Left cardiac atrium (tissue), 4 donors: ENCODE measurements at regions of chr2 and their contacts with region 1.

Region 1: DNA sequence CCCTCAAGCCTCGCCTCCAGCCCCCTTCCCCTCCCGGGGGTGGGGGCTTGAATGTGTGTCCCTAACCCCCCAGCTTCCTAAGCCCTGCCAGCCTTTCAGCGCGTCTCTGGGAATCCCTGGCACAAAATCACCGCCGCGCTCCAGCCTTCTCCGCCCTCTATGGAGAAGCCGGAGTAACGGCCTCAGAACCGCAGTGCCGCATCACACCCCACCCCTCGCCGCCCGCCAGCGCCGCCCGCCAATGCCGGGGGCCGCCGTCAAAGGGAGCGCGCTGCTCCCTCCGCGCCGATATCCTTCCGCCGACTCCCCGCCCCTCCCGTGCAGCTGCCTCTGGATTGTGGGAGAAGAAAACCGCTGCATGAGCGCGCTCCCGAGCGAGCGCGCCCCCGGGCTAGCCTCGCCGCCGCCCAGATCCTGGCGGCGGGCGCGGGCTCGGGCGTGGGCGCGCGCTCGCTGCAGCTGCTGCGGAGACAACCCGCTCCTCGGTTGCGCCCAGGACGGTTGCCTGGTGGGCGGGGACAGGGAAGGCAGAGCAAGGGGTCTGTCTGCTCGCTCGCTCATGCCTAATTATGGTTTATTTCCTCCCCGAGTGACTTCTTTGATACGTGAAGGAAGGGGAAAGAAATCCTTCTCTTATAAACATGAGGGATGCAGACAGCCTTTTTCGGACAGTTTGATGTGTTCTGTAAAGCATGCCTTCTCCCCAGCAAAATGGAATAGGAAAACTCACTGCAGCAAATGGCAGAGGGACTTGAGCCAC is at the start of gene CCDC88A:
- DNase-seq: peak; percentile 96
- ATAC-seq: peak; percentile 98
- total RNA-seq, gene CCDC88A: 29.0 to 33.0 TPM

Region 2: GRCh38 chr2:55364189-55365055 is 55.4 kb before region 1 on chr2:
- intact Hi-C with region 1: loop called in 1 of 2 experiments (anchors 10 kb)
- DNase-seq: peak; percentile 39
- ATAC-seq: peak; percentile 89 to 98

Region 3: DNA sequence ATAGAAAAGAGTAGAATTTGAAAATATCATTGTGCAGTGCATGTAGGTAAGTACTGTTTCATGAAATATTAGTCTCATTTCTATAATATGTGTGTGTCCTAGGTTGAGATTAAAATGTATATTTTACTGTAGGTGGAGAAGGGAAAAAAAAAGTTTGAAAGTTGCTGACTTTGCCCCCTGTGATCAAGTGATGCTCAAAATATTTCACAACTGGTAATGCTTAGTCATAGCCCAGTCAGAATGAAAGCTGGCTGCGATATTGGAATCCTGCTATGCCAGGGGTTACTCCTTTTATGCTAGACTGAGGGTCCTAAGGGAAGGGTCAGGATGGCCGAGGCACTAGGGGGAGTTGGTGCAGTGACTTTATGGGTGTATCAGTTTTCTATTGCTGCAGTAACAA is 80.2 kb after region 1 on chr2:
- intact Hi-C with region 1: loop called in 1 of 2 experiments (anchors 10 kb)
- DNase-seq: no peak
- ATAC-seq: no peak